ENCODE measurements at regions of chr2 and their contacts with region 1.

Region 1: DNA sequence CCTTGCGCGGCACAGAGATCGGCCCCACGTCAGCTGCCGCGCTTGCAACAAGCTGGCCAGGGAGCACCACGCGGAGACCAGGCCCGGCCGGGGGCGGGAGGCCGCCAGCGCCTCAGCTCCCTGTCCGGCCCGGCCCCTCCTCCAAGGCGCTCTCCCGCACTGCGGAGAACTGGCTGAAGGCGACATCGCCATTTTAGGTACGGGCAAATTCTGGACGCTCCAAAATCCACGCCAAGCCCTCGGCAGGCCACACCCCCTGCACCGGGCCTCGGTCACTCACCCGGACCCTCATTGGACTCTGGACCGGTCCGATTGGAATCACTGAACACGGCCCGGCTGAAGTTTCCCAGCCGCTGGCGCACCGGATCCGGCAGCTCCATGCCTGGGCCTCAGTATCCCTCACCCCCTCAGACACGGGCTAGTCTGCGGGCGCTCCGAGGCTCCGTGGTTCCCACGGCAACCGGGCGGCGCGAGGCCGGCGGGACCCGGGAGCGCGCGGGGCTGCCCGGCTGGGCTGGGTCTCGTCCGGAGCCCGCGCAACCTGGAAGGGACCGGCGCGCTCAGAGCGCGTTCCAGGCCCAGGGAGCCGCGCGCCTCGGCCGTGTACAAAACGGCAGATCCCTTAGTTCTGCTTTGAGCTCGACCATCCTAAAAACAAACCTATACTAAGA is at the start of gene TMEM17:
- DNase-seq: peak; percentile 81 to 97
- ATAC-seq: peak; percentile 92 to 94
- H3K4me3 ChIP-seq: peak within 1 kb of the TSS; percentile 44
- H3K27ac ChIP-seq: peak within 1 kb of the TSS; percentile 83 to 93
- H3K4me1 ChIP-seq: peaks cover 26% of the 10 kb centered on the region
- CTCF ChIP-seq: no peak
- EP300 ChIP-seq: no peak
- POLR2A ChIP-seq: peak; percentile 72
- RAD21 ChIP-seq: peak in 1 of 2 experiments; percentile 36; a peak in 3 of 5 replicates
- polyA plus RNA-seq, gene TMEM17: 7.9 and 10.2 TPM in 2 replicates

Region 2: DNA sequence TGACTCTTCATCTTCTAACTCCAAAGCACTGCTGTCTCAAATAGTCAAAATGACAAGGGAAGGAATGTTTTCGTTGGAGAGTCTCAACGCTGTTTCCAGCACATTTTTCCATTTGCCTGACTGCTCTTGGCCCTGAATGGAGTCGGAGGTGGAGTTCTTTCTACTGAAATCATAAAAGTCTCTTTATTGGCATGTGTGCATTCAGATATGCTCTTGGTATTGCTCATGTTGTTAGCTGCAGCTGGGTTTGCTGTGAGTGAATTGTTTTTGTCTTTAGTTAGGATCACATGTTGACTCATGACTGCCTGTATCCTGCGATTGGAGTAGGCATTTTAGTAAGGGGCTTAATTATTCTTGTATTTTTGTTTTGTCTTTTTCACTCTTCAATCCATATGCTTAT is 16.7 kb before region 1 on chr2:
- CTCF ChIA-PET with region 1: interaction called, 3 read pairs
- POLR2A ChIA-PET with region 1: interaction called, 12 read pairs
- DNase-seq: no peak
- ATAC-seq: no peak
- H3K4me3 ChIP-seq: no peak overlapping the region
- H3K27ac ChIP-seq: peak overlapping the region in 1 of 2 experiments; percentile 23; a peak in 2 of 6 replicates
- H3K4me1 ChIP-seq: peaks cover 22% of the 10 kb centered on the region
- CTCF ChIP-seq: no peak
- EP300 ChIP-seq: no peak
- POLR2A ChIP-seq: no peak
- RAD21 ChIP-seq: no peak

Region 3: DNA sequence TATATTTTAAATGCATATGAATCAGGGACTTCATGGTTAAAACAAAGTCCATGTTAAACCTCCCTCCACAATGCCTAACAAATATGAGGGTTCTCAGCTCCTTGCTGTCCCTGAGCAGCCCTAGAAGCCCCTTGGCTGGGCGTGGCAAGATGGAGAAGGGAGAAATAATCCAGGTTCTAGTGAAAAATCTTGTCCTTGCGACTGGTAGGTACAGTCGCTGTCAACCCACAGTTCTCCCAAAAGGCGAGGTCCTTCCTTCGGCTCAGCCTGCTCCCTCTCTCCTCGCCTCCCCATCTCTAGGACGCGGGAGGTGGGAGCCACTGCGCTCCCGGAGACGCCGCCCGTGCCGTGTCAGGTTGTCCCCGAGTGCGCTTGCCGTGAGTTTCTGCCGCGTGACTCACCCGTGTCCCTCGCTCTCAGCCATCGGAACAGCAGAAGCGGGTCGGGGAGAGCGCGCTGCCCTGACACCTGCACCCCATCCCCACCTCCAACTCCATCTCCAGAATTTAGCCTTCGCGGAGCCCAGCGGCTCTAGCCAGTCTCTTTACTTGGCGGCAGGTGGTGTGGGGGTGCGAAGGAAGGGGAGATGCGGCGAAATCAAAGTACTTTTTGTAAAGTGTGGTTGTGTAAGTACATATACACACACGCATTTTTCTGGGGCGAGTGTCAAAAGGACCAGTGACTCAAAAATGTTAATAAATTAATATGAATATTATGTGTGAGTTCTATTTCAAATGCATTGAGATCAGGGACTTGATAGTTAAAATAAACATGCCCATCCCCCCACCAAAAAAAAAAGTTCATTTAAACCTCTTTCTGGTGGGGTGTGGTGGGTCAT is 65.2 kb after region 1 on chr2:
- CTCF ChIA-PET with region 1: interaction called, 4 read pairs
- POLR2A ChIA-PET with region 1: interaction called, 47 read pairs
- DNase-seq: peak; percentile 58 to 63
- ATAC-seq: peak; percentile 61 to 64
- H3K4me3 ChIP-seq: peak overlapping the region; percentile 36
- H3K27ac ChIP-seq: peak overlapping the region; percentile 94 to 96
- H3K4me1 ChIP-seq: peaks cover 65% of the 10 kb centered on the region
- CTCF ChIP-seq: no peak
- EP300 ChIP-seq: peak; percentile 43 to 70; a peak in 3 of 5 replicates
- POLR2A ChIP-seq: peak; percentile 14; the same call in 1 of the 2 replicates
- RAD21 ChIP-seq: no peak; a peak in 1 of 5 replicates

Region 4: DNA sequence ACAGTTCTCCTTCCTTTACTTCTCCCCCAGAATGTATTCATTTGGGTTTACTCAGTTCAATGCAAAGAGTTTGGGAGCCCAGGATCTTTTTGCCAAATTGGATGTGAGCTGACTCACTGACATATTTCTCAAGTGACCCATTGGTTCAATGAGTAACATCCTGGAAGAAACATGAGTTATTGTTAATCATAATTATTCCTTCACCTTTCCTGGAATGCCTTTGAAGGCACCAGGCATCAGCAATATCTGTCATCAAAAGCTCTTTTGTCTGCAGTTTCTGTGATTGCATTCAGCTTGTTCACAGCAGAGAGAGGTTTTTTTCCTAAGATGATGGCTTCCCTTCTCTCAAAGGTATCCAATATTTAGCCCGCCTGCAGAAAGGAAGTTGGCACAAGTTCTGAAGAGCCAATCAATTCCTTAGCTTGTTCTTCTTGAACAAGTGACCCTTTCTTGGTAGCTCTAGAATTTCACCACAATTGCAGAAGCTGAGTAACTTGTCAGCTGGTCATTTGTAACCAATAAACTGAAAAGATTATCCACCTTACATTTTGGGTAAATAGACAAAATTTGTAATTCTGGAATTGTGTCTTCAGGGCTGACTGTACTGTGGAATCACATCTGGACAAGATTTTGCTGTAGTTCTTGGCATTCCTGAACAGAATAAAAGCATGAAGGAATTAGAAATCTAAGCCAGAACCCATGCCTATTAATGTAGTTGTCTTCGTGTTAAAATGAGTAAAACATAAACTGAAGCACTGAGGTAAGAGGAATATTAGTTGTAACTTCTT is 72.3 kb after region 1 on chr2:
- CTCF ChIA-PET with region 1: interaction called, 4 read pairs
- POLR2A ChIA-PET with region 1: interaction called, 30 read pairs
- DNase-seq: peak; percentile 72 to 94
- ATAC-seq: peak; percentile 80 to 87
- H3K4me3 ChIP-seq: 0 out of 3 replicates have a peak overlapping the region, but pooled peaks have one; percentile 13
- H3K27ac ChIP-seq: peak overlapping the region; percentile 94 to 96
- H3K4me1 ChIP-seq: peaks cover 41% of the 10 kb centered on the region
- CTCF ChIP-seq: no peak
- EP300 ChIP-seq: peak; percentile 99; a peak in 4 of 5 replicates
- POLR2A ChIP-seq: no peak
- RAD21 ChIP-seq: peak; percentile 45 to 80

Region 5: GRCh38 chr2:62589691-62590356 is 83.9 kb after region 1 on chr2:
- CTCF ChIA-PET with region 1: no interaction called
- POLR2A ChIA-PET with region 1: no interaction called
- DNase-seq: no peak
- ATAC-seq: no peak
- H3K4me3 ChIP-seq: no peak overlapping the region
- H3K27ac ChIP-seq: peak overlapping the region in 1 of 2 experiments; percentile 67; a peak in 3 of 6 replicates
- H3K4me1 ChIP-seq: 0 out of 3 replicates have a peak, but pooled peaks cover 5% of the 10 kb centered on the region
- CTCF ChIP-seq: no peak
- EP300 ChIP-seq: no peak
- POLR2A ChIP-seq: no peak
- RAD21 ChIP-seq: no peak

Region 6: GRCh38 chr2:62705007-62705829 is 199.3 kb after region 1 on chr2 and contains the start of gene EHBP1:
- CTCF ChIA-PET with region 1: no interaction called
- POLR2A ChIA-PET with region 1: interaction called, 37 read pairs
- DNase-seq: peak; percentile 98 to 100
- ATAC-seq: peak; percentile 91 to 96
- H3K4me3 ChIP-seq: peak within 1 kb of the TSS; percentile 68
- H3K27ac ChIP-seq: peak within 1 kb of the TSS; percentile 94 to 97
- H3K4me1 ChIP-seq: peaks cover 22% of the 10 kb centered on the region
- CTCF ChIP-seq: no peak
- EP300 ChIP-seq: no peak
- POLR2A ChIP-seq: peak; percentile 91
- RAD21 ChIP-seq: peak in 1 of 2 experiments; percentile 29; a peak in 1 of 5 replicates
- polyA plus RNA-seq, gene EHBP1: 145 and 204 TPM in 2 replicates